ENCODE measurements at regions of chr22 and their contacts with region 1.

Region 1: DNA sequence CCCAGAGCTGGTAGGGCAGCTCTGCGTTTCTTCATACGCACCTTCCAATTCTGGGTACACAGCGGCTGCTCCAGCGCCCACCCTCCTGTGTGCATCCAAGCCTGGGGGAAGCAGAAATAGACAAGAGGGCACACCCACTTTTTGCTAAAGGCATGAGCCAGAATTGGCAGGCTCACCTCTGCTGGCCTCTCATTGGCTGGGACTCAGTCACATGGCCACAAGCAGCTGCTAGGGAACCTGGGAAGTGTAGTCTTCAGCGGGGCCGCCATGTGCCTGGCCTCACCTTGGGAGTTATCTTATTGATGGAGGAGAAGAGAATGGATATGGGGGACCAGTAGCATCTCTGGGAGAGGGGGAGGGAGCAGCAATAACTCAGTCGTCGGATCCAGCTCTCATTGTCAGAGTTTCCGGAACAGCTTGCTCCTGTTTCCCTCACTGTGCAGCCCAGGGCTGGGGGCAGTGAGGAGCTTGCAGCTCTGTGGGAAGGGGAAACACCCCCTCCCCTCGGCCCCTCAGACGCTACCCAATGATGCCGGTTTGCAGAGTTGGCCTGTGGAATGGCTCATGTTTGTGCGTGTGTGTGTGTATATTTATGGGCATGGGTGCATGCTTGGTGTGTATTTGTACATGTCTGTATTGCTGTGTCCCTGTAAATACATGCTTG is 11.8 kb upstream of the MIEF1 start:
- DNase-seq: peak; percentile 89
- ATAC-seq: peak; percentile 99
- H3K4me3 Mint-ChIP-seq: peak overlapping the region; percentile 37
- H3K27ac Mint-ChIP-seq: peak overlapping the region; percentile 33
- H3K4me1 Mint-ChIP-seq: peaks cover 39% of the 10 kb centered on the region
- H3K27me3 Mint-ChIP-seq: no peaks in the 10 kb centered on the region

Region 2: DNA sequence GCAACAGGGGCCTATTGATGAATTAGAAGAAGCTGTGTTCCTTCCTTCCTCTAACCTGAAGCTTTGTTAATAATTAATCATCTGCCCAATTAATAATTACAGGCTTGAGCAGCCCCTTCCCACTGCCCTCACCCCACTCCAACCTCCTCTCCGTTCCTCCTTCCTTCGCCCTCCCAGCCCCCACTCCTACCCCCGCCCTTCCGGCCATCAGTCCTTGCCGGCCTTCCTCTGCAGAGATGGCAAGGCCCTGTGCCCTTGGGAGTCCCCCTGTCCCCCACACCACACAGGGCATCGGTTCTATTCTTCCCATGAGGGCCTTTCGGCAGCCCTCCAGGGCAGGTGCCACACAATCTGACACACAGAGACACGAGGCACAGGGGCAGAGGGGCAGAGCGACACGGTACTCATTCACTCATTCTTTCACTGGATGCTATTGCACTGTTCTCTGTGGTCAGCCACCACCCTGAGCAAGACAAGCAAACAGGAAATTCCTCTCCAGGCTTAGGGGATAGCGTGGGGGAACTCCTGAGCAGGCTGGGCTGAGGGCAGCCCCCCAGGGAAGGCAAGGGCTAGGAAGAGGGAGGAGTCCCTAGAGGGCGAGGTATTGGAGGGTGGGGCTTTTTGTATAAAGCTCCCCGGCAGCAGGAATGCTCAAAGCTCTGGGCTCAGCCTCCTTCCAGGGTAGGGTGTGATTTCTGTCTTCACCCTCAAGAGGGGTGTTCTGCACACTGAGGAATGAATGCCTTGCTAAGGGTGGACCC is 18.7 kb before region 1 on chr22:
- CTCF ChIA-PET with region 1: interaction called, 10 read pairs
- POLR2A ChIA-PET with region 1: interaction called, 3 read pairs
- DNase-seq: peak; percentile 45
- ATAC-seq: peak; percentile 70
- H3K4me3 Mint-ChIP-seq: no peak overlapping the region
- H3K27ac Mint-ChIP-seq: peak overlapping the region; percentile 86
- H3K4me1 Mint-ChIP-seq: peaks cover 35% of the 10 kb centered on the region
- H3K27me3 Mint-ChIP-seq: no peaks in the 10 kb centered on the region

Region 3: GRCh38 chr22:40036591-40037225 is 546.4 kb after region 1 on chr22:
- CTCF ChIA-PET with region 1: interaction called, 13 read pairs
- POLR2A ChIA-PET with region 1: no interaction called
- DNase-seq: peak; percentile 73
- ATAC-seq: peak; percentile 76
- H3K4me3 Mint-ChIP-seq: no peak overlapping the region
- H3K27ac Mint-ChIP-seq: no peak overlapping the region
- H3K4me1 Mint-ChIP-seq: peaks cover 31% of the 10 kb centered on the region
- H3K27me3 Mint-ChIP-seq: peaks cover 8% of the 10 kb centered on the region